ENCODE measurements at regions of chr12 and their contacts with region 1.

Region 1: GRCh38 chr12:39095636-39096330 is 190.4 kb upstream of the CPNE8 start:
- DNase-seq: no peak
- ATAC-seq: no peak
- H3K4me3 ChIP-seq: no peak overlapping the region
- H3K27ac ChIP-seq: no peak overlapping the region
- H3K4me1 ChIP-seq: no peaks in the 10 kb centered on the region
- H3K27me3 ChIP-seq: no peaks in the 10 kb centered on the region
- CTCF ChIP-seq: no peak
- POLR2A ChIP-seq: no peak

Region 2: DNA sequence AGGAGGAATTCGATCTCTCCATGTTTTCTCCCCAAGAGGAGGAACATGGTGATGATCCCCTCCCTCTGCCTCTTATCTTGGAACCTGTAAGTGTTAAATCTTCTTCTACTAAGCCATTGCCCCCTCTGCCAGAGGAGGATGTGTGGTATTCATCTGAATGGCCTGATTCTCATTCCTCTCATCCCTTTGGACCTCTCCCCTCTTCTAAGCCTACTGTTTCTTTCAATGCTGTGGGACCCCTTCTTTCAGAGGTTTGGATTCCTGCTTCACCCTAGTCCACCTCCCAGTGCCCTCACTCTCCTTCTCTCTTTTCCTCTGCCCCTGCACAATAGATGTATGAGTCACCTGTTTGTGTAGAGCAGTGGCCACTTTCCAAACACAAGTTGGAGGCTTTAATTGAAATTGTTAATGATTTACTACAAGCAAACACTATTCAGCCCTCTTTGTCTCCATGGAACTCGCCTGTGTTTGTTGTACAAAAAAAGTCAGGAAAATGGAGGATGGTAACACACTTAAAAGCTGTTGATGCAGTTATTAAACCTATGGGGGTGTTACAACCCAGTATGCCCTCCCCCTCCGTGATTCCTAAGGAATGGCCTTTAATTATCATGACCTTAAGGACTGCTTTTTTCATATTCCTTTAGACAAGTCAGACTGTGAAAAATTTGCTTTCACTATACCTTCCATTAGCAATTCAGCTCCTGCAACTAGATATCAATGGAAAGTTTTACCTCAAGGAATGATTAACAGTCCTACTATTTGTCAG is 971.4 kb before region 1 on chr12:
- in situ Hi-C with region 1: loop called in 1 of 4 experiments (anchors 25 kb)
- intact Hi-C with region 1: no loop called
- DNase-seq: no peak
- ATAC-seq: no peak
- H3K4me3 ChIP-seq: no peak overlapping the region
- H3K27ac ChIP-seq: no peak overlapping the region
- H3K4me1 ChIP-seq: no peaks in the 10 kb centered on the region
- H3K27me3 ChIP-seq: peaks cover 0 to 2% (median 0%) of the 10 kb centered on the region in 3 donors
- CTCF ChIP-seq: no peak
- POLR2A ChIP-seq: no peak

Region 3: GRCh38 chr12:38332814-38333213 is 763.0 kb before region 1 on chr12:
- in situ Hi-C with region 1: loop called in 3 of 4 experiments (anchors 25 kb)
- intact Hi-C with region 1: no loop called
- DNase-seq: no peak
- ATAC-seq: no peak
- H3K4me3 ChIP-seq: no peak overlapping the region
- H3K27ac ChIP-seq: no peak overlapping the region
- H3K4me1 ChIP-seq: no peaks in the 10 kb centered on the region
- H3K27me3 ChIP-seq: no peaks in the 10 kb centered on the region
- CTCF ChIP-seq: no peak
- POLR2A ChIP-seq: no peak

Measured in gastrocnemius medialis (tissue), 4 donors.